Activated CD4-positive, alpha-beta T cell treated with anti-CD3 and anti-CD28 coated beads for 36 hours (primary cell): ENCODE measurements at regions of chr1 and their contacts with region 1.

Region 1: DNA sequence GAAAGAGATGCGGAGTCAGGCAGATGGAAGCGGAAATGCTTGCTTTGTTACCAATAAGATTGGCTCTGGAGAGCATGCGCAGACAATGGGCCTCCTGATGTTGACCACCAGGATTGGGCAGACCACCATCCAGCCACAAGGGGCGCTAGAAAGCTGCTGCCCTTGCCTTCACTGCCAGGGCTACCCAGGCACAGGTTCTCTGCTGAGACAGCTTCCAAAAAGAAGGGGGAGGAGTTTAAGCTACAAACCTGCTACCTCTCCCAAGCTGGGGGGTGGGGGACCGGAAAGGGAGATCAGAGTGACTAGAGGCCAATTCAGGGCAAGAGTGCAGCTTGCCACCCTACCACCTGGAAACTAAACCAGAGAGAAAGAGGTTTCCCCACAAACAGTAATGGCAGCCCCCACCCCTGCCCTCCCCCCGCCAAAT is 369.7 kb downstream of the RRAGC start:
- DNase-seq: peak; percentile 75
- ATAC-seq: peak; percentile 84
- H3K4me3 Mint-ChIP-seq: no peak overlapping the region
- H3K27ac Mint-ChIP-seq: no peak overlapping the region
- H3K4me1 Mint-ChIP-seq: peaks cover 4% of the 10 kb centered on the region
- H3K27me3 Mint-ChIP-seq: peaks cover 14% of the 10 kb centered on the region

Region 2: DNA sequence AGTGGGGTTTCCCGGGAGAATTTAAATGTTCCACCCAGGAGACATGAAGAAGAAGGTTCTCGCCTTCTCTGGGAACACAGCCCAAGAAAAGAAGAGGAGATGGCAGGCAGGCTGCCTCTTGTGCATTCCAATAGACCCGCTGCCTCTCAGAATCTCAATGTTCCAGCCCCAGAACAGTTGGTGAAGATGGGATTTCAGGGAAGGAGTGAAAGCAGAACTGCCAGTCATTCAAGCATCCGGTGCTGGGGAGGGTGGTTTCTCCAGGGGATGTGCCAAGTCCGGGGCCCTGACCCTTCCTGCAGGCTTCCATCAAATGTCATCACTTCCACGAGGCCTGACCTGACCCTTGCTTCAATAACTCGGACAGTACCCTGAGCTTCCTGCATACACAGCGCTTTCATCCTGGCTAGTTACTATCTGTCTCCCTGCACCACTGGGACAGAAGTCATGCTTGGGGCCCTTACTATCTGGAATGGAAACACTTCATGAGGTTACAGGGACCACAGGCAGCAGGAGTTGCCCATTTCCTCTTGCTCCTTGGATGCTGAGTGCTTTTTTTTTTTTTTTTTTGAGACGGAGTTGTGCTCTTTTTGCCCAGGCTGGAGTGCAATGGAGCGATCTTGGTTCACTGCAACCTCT is 56.7 kb before region 1 on chr1:
- CTCF ChIA-PET with region 1: no interaction called
- POLR2A ChIA-PET with region 1: no interaction called
- intact Hi-C with region 1: no loop called
- DNase-seq: no peak
- ATAC-seq: no peak
- H3K4me3 Mint-ChIP-seq: no peak overlapping the region
- H3K27ac Mint-ChIP-seq: no peak overlapping the region
- H3K4me1 Mint-ChIP-seq: no peaks in the 10 kb centered on the region
- H3K27me3 Mint-ChIP-seq: peaks cover 2% of the 10 kb centered on the region

Region 3: DNA sequence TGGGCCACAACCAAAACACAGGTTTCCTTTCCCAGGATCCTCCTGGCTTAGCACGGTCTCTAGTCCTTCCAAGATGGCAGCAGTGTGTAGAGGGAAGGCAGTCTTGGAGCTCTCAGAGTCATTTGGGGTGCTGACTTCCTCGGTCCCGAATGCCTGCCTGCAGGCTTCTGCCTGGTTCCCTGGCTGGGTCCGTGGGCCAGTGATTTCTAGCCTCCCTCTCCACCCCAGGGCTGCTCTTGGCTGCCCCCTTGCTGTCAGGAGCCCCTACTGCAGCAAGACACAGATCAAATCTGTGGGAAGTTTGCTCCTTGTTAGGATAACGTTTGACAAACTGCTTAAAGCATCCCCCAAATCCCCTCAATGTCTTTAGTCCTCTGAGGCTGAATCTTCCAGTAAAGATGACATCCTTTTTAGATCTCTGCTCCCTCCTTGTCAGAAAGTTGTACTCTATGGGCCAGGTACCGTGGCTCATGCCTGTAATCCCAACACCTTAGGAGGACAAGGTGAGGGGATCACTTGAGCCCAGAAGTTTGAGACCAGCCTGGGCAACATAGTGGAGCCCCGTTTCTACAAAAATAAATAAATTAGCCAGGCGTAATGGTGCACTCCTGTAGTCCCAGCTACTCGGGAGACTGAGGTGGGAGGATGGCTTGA is 97.3 kb after region 1 on chr1:
- CTCF ChIA-PET with region 1: interaction called, 3 read pairs
- POLR2A ChIA-PET with region 1: no interaction called
- intact Hi-C with region 1: loop called (anchors 1 to 5 kb)
- DNase-seq: peak; percentile 75
- ATAC-seq: peak; percentile 74
- H3K4me3 Mint-ChIP-seq: no peak overlapping the region
- H3K27ac Mint-ChIP-seq: no peak overlapping the region
- H3K4me1 Mint-ChIP-seq: peaks cover 8% of the 10 kb centered on the region
- H3K27me3 Mint-ChIP-seq: no peaks in the 10 kb centered on the region